ENCODE measurements at regions of chr18 and their contacts with region 1.

Region 1: GRCh38 chr18:35343936-35344735 is at the start of gene ZNF24:
- DNase-seq: peak; percentile 83 to 95 (median 88)
- ATAC-seq: peak; percentile 92
- H3K4me3 ChIP-seq: peak within 1 kb of the TSS; percentile 96
- H3K4me3 Mint-ChIP-seq: peak within 1 kb of the TSS; percentile 97
- H3K27ac ChIP-seq: peak within 1 kb of the TSS; percentile 99
- H3K27ac Mint-ChIP-seq: peak within 1 kb of the TSS; percentile 97
- H3K4me1 ChIP-seq: peaks cover 27% of the 10 kb centered on the region
- H3K4me1 Mint-ChIP-seq: peaks cover 55% of the 10 kb centered on the region
- H3K27me3 ChIP-seq: no peaks in the 10 kb centered on the region
- H3K27me3 Mint-ChIP-seq: no peaks in the 10 kb centered on the region
- CTCF ChIP-seq: no peak
- total RNA-seq, gene ZNF24: 65.9 to 68.3 TPM

Region 2: DNA sequence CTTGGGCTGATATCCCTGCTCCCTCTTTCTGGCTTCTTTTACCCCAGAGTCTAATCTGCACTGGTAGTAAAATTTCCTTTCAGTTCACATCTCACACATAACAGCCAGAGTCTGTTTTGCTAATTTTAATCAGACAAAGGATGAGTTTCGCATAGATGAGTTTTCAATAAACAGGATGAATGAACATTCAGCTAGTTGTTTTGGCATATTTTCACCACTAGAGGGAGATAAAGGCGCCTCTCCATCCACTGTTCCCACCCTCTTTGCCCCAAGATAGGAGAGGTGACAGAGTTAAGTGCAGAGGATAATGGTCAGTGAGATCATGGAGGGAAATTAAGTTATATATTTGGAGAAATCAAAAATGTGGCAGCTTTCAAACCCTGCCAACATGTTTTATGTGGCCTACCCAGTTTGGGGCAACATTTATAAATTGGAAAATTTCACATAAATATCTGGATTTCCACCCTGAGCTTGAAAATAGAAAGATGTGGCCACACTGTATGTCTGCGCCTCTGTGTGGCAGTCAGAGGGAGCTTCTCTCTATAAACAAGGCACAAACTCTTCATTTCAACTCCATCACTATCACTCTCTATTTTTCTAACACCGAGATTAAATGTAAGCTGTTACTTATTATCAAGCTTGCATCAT is 682.5 kb before region 1 on chr18:
- CTCF ChIA-PET with region 1: no interaction called
- POLR2A ChIA-PET with region 1: no interaction called
- intact Hi-C with region 1: no loop called
- DNase-seq: peak in 3 of 14 experiments; percentile 9 to 22 (median 20)
- ATAC-seq: no peak
- H3K4me3 ChIP-seq: no peak overlapping the region
- H3K4me3 Mint-ChIP-seq: no peak overlapping the region
- H3K27ac ChIP-seq: no peak overlapping the region
- H3K27ac Mint-ChIP-seq: no peak overlapping the region
- H3K4me1 ChIP-seq: no peaks in the 10 kb centered on the region
- H3K4me1 Mint-ChIP-seq: no peaks in the 10 kb centered on the region
- H3K27me3 ChIP-seq: no peaks in the 10 kb centered on the region
- H3K27me3 Mint-ChIP-seq: peaks cover 20% of the 10 kb centered on the region
- CTCF ChIP-seq: peak; percentile 65

Region 3: DNA sequence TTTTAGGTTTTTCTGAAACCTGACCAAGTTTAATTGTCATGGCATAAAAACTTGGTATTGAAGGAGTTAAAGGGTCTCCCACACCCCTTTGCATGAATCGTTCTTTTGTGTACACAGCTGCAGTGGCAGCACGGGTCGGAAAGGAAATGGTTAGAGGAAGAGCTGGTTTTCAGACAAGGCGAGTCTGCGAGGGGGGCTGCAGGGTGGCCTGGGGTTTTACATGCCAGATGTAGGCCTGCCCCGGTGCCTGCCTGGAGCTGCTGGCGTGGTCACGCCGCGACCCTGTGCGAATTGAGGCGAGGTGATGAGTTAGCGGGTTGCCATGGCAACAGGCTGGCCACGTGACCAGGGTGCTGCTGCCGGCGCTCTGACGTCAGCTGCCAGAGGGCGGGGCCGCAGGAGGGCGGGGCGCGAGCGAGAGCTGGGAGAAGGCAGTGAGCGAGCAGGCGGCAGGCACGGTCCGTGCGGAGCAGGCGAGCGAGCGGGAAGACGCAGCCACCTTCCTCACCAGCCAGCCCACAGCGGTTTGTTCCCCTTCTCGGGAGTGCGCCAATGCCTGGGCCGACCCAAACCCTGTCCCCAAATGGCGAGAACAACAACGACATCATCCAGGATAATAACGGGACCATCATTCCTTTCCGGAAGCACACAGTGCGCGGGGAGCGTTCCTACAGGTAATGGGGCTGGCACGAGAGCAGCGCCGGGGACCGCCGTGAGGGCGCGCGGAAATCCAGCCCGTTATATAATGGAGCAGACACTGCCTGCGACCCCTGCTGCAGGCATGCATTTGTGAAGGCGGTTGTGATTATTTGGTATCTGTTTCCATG is 302.9 kb before region 1 on chr18 and contains the start of gene MAPRE2:
- CTCF ChIA-PET with region 1: interaction called, 3 read pairs
- POLR2A ChIA-PET with region 1: interaction called, 5 read pairs
- intact Hi-C with region 1: loop called (anchors 5 kb)
- DNase-seq: peak; percentile 98 to 100 (median 99)
- ATAC-seq: peak; percentile 76
- H3K4me3 ChIP-seq: peak within 1 kb of the TSS; percentile 94
- H3K4me3 Mint-ChIP-seq: peak within 1 kb of the TSS; percentile 90
- H3K27ac ChIP-seq: peak within 1 kb of the TSS; percentile 89 to 91
- H3K27ac Mint-ChIP-seq: peak within 1 kb of the TSS; percentile 95
- H3K4me1 ChIP-seq: peaks cover 27% of the 10 kb centered on the region
- H3K4me1 Mint-ChIP-seq: peaks cover 58% of the 10 kb centered on the region
- H3K27me3 ChIP-seq: no peaks in the 10 kb centered on the region
- H3K27me3 Mint-ChIP-seq: no peaks in the 10 kb centered on the region
- CTCF ChIP-seq: no peak
- total RNA-seq, gene MAPRE2: 108 to 112 TPM

Region 4: GRCh38 chr18:35203067-35203466 is 141.1 kb before region 1 on chr18:
- CTCF ChIA-PET with region 1: no interaction called
- POLR2A ChIA-PET with region 1: no interaction called
- intact Hi-C with region 1: no loop called
- DNase-seq: no peak
- ATAC-seq: no peak
- H3K4me3 ChIP-seq: no peak overlapping the region
- H3K4me3 Mint-ChIP-seq: no peak overlapping the region
- H3K27ac ChIP-seq: no peak overlapping the region
- H3K27ac Mint-ChIP-seq: no peak overlapping the region
- H3K4me1 ChIP-seq: no peaks in the 10 kb centered on the region
- H3K4me1 Mint-ChIP-seq: no peaks in the 10 kb centered on the region
- H3K27me3 ChIP-seq: no peaks in the 10 kb centered on the region
- H3K27me3 Mint-ChIP-seq: no peaks in the 10 kb centered on the region
- CTCF ChIP-seq: no peak

Region 5: GRCh38 chr18:35267161-35267651 is 76.9 kb before region 1 on chr18:
- CTCF ChIA-PET with region 1: interaction called, 3 read pairs
- POLR2A ChIA-PET with region 1: interaction called, 19 read pairs
- intact Hi-C with region 1: no loop called
- DNase-seq: peak; percentile 40 to 85 (median 66)
- ATAC-seq: peak; percentile 76
- H3K4me3 ChIP-seq: peak overlapping the region; percentile 76
- H3K4me3 Mint-ChIP-seq: peak overlapping the region; percentile 96
- H3K27ac ChIP-seq: peak overlapping the region; percentile 69 to 75
- H3K27ac Mint-ChIP-seq: peak overlapping the region; percentile 92
- H3K4me1 ChIP-seq: peaks cover 18% of the 10 kb centered on the region
- H3K4me1 Mint-ChIP-seq: peaks cover 28% of the 10 kb centered on the region
- H3K27me3 ChIP-seq: no peaks in the 10 kb centered on the region
- H3K27me3 Mint-ChIP-seq: no peaks in the 10 kb centered on the region
- CTCF ChIP-seq: no peak

Region 6: GRCh38 chr18:35497370-35498197 is 153.4 kb after region 1 on chr18 and contains the start of gene INO80C:
- CTCF ChIA-PET with region 1: no interaction called
- POLR2A ChIA-PET with region 1: interaction called, 13 read pairs
- intact Hi-C with region 1: loop called in 1 of 2 experiments (anchors 5 kb)
- DNase-seq: peak; percentile 83 to 98 (median 90)
- ATAC-seq: peak; percentile 88
- H3K4me3 ChIP-seq: peak within 1 kb of the TSS; percentile 85
- H3K4me3 Mint-ChIP-seq: peak within 1 kb of the TSS; percentile 98
- H3K27ac ChIP-seq: peak within 1 kb of the TSS; percentile 95 to 98
- H3K27ac Mint-ChIP-seq: peak within 1 kb of the TSS; percentile 99
- H3K4me1 ChIP-seq: peaks cover 17% of the 10 kb centered on the region
- H3K4me1 Mint-ChIP-seq: peaks cover 43% of the 10 kb centered on the region
- H3K27me3 ChIP-seq: no peaks in the 10 kb centered on the region
- H3K27me3 Mint-ChIP-seq: no peaks in the 10 kb centered on the region
- CTCF ChIP-seq: no peak
- total RNA-seq, gene INO80C: 13.0 to 16.0 TPM

Region 7: DNA sequence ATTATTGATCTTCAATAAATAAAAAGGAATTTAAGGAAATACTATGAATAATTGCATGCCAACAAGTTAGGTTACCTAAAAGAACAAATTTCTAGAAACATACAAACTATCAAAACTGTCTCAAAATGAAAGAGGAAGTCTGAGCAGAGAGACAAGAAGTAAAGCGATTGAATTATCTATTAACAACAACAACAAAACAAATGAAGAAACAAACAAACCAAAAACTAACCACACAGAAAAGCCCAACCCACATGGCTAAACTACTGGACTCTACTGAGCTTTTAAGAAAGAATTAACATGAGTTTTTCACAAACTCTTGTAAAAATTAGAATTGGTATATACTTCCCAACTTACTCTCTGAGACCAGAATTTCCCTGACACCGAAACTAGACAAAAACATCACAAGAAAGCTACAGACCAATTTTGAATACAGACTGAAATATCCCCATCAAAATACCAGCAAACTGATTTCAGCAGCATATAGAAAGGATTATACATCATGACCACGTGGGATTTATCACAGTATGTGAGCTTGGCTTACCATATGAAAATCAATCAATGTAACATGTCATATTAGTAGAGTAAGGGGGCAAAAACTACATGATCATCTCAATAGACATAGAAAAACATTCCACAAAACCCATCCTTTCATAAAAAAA is 220.8 kb after region 1 on chr18:
- CTCF ChIA-PET with region 1: no interaction called
- POLR2A ChIA-PET with region 1: no interaction called
- intact Hi-C with region 1: no loop called
- DNase-seq: no peak
- ATAC-seq: no peak
- H3K4me3 ChIP-seq: no peak overlapping the region
- H3K4me3 Mint-ChIP-seq: no peak overlapping the region
- H3K27ac ChIP-seq: no peak overlapping the region
- H3K27ac Mint-ChIP-seq: no peak overlapping the region
- H3K4me1 ChIP-seq: no peaks in the 10 kb centered on the region
- H3K4me1 Mint-ChIP-seq: no peaks in the 10 kb centered on the region
- H3K27me3 ChIP-seq: no peaks in the 10 kb centered on the region
- H3K27me3 Mint-ChIP-seq: peaks cover 5% of the 10 kb centered on the region
- CTCF ChIP-seq: no peak

Region 8: DNA sequence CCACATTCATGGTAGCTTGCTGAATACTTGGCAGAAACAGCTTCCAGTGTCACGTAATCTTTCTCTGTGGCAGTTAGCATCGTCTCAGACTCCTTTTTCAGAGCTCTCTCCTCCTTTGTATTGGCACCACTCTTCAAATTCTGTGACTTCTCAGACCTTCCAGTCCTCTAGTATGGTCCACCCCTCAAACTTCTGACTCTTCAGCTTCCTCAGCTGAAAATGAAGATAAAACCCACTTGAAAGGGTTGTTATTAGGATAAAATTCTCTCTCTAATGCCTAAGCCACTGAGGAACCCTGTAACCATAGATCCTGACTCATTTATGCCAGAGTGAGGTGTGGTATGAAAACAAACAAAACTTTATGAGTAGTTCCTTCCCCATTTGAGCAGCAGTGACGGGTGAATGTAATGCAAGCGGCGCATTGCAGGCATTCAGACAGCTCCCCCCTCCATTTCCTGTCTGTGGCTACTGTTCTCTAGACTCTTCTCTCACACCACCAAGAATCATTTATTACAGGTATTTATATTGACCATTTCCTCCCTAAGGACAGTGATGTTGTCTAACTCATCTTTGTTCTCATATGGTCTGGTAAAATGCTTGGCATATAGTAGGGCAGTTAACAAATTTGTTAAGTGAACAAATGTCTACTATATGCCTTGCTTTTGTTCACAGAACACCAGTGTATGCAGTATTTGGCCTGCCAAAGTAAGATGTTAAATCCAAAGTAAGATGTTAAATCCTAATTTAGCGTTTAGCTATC is 272.7 kb after region 1 on chr18:
- CTCF ChIA-PET with region 1: no interaction called
- POLR2A ChIA-PET with region 1: no interaction called
- intact Hi-C with region 1: no loop called
- DNase-seq: peak; percentile 13 to 84 (median 57)
- ATAC-seq: peak; percentile 93
- H3K4me3 ChIP-seq: peak overlapping the region; percentile 4
- H3K4me3 Mint-ChIP-seq: no peak overlapping the region
- H3K27ac ChIP-seq: peak overlapping the region; percentile 16 to 66
- H3K27ac Mint-ChIP-seq: no peak overlapping the region
- H3K4me1 ChIP-seq: peaks cover 6% of the 10 kb centered on the region
- H3K4me1 Mint-ChIP-seq: peaks cover 5% of the 10 kb centered on the region
- H3K27me3 ChIP-seq: no peaks in the 10 kb centered on the region
- H3K27me3 Mint-ChIP-seq: no peaks in the 10 kb centered on the region
- CTCF ChIP-seq: no peak

Region 9: DNA sequence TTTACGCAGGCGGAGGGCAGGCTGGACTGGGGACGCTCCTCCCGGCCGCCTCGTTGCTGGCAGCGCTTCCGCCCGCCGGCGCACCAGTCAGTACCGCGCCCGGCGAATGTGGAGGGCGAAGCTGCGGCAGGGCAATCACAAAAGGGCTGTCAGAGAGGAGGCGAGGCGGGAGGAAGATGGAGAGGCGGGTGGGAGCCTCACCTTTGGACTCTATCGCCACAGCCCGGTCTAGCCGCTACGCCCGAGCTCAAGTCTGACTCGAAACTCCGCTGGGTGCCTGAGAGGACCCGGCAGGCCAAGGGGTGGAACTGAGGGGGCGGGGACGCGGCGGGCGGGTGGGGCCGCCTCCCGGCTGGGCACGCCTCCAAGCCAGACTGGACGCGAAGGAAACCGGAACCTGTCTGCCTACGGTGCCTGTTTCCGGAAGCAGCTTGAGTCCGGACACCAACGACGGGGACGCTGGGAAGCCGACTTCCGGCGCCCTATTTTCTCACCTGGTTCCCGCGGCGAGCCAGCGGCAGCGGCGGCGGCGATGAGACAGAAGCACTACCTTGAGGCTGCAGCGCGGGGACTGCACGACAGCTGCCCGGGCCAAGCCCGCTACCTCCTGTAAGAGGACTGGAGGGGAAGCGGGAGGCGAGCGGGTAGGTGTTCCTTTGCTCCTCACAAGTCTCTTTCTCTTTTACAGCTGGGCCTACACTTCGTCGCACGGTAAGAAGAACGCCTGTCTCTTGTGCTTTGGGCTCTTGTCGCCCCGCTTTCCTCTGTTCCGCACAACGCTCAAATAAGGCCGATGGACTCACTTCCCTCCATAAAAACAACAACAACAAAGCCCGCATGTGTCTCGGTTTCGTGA is 628.3 kb after region 1 on chr18 and contains the start of gene RMP24:
- CTCF ChIA-PET with region 1: no interaction called
- POLR2A ChIA-PET with region 1: interaction called, 7 read pairs
- intact Hi-C with region 1: loop called in 1 of 2 experiments (anchors 5 kb)
- DNase-seq: peak; percentile 86 to 97 (median 92)
- ATAC-seq: peak; percentile 82
- H3K4me3 ChIP-seq: peak within 1 kb of the TSS; percentile 73
- H3K4me3 Mint-ChIP-seq: peak within 1 kb of the TSS; percentile 97
- H3K27ac ChIP-seq: peak within 1 kb of the TSS; percentile 84 to 88
- H3K27ac Mint-ChIP-seq: peak within 1 kb of the TSS; percentile 96
- H3K4me1 ChIP-seq: peaks cover 34% of the 10 kb centered on the region
- H3K4me1 Mint-ChIP-seq: peaks cover 72% of the 10 kb centered on the region
- H3K27me3 ChIP-seq: no peaks in the 10 kb centered on the region
- H3K27me3 Mint-ChIP-seq: no peaks in the 10 kb centered on the region
- CTCF ChIP-seq: no peak

Region 10: DNA sequence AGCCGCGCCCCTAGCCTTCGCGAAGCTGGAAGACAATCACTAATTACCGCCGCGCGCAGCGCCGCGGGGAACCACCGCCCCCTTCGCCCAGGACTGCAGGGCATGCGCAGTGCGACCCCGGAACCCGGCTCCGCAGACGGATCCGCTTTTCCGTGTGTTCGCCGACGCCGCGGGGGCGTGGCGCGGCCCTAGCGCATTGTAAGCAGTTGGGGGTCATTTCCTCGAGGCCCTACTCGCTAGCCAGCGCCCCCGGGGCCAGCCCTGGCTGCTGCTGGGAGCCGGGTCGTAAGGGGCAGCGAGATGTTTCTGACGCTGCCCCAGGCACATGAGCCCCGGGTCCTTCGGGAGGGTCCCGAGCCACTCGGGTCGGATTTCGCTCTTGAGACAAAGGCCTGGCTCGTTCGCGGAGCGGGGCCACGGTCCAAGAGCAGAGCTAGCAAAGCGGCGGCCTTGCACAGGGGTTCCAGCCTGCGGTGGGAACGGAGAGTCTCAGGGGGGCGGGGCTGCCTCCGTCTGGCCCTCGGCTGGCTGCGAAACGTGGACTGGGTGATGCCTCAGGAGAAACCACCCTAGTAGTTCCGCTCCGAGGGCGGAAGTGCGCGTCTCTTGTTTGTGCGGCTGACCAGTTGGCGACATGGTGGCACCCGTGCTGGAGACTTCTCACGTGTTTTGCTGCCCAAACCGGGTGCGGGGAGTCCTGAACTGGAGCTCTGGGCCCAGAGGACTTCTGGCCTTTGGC is 785.3 kb after region 1 on chr18 and contains the starts of genes ELP2 and SLC39A6:
- CTCF ChIA-PET with region 1: no interaction called
- POLR2A ChIA-PET with region 1: interaction called, 3 read pairs
- intact Hi-C with region 1: loop called in 1 of 2 experiments (anchors 5 kb)
- DNase-seq: peak; percentile 91 to 98 (median 94)
- ATAC-seq: peak; percentile 87
- H3K4me3 ChIP-seq: peak within 1 kb of the TSS; percentile 77
- H3K4me3 Mint-ChIP-seq: peak within 1 kb of the TSS; percentile 95
- H3K27ac ChIP-seq: peak within 1 kb of the TSS; percentile 99
- H3K27ac Mint-ChIP-seq: peak within 1 kb of the TSS; percentile 98
- H3K4me1 ChIP-seq: peaks cover 48% of the 10 kb centered on the region
- H3K4me1 Mint-ChIP-seq: peaks cover 75% of the 10 kb centered on the region
- H3K27me3 ChIP-seq: no peaks in the 10 kb centered on the region
- H3K27me3 Mint-ChIP-seq: no peaks in the 10 kb centered on the region
- CTCF ChIP-seq: peak; percentile 0
- total RNA-seq, gene ELP2: 200 to 206 TPM
- total RNA-seq, gene SLC39A6: 10.6 to 11.0 TPM